Transverse colon (tissue), 4 donors: ENCODE measurements at regions of chr1 and their contacts with region 1.

Region 1: GRCh38 chr1:247146671-247147070 is 25.1 kb downstream of the ZNF124 start:
- DNase-seq: no peak
- H3K4me3 ChIP-seq: no peak overlapping the region
- H3K27ac ChIP-seq: no peak overlapping the region
- H3K4me1 ChIP-seq: no peaks in the 10 kb centered on the region
- H3K27me3 ChIP-seq: no peaks in the 10 kb centered on the region
- CTCF ChIP-seq: no peak
- EP300 ChIP-seq: no peak
- POLR2A ChIP-seq: no peak

Region 2: DNA sequence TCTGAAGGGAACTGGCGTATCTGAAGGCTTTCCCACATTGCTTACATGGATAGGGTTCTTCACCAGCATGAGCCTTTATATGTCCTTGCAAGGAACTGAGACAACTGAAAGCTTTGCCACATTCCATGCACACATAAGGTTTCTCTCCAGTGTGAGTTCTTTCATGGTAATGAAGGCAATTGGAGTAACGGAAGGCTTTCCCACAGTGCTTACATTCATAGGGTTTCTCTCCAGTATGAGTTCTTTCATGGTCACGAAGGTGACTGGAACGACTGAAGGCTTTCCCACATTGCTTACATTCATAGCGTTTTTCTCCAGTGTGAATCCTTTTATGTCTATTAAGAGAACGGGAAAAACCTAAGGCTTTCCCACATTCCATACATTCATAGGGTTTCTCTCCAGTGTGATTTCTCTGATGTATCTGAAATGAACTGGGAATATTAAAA is 10.1 kb after region 1 on chr1:
- in situ Hi-C with region 1: no loop called
- intact Hi-C with region 1: loop called (anchors 1 kb)
- DNase-seq: no peak
- H3K4me3 ChIP-seq: no peak overlapping the region
- H3K27ac ChIP-seq: no peak overlapping the region
- H3K4me1 ChIP-seq: no peaks in the 10 kb centered on the region
- H3K27me3 ChIP-seq: no peaks in the 10 kb centered on the region
- CTCF ChIP-seq: no peak
- EP300 ChIP-seq: no peak
- POLR2A ChIP-seq: no peak